ENCODE measurements at regions of chr6 and their contacts with region 1.

Region 1: GRCh38 chr6:89829591-89830385 is at the start of gene CASP8AP2:
- DNase-seq: peak; percentile 97
- H3K4me3 Mint-ChIP-seq: peak within 1 kb of the TSS; percentile 100
- H3K27ac Mint-ChIP-seq: peak within 1 kb of the TSS; percentile 97
- H3K4me1 Mint-ChIP-seq: peaks cover 36% of the 10 kb centered on the region
- H3K27me3 Mint-ChIP-seq: no peaks in the 10 kb centered on the region
- total RNA-seq, gene CASP8AP2: 45.1 to 49.6 TPM

Region 2: GRCh38 chr6:89819336-89820130 is 10.3 kb before region 1 on chr6 and contains the start of gene MDN1:
- CTCF ChIA-PET with region 1: interaction called, 11 read pairs
- POLR2A ChIA-PET with region 1: interaction called, 10 read pairs
- DNase-seq: peak; percentile 93
- H3K4me3 Mint-ChIP-seq: peak within 1 kb of the TSS; percentile 82
- H3K27ac Mint-ChIP-seq: peak within 1 kb of the TSS; percentile 93
- H3K4me1 Mint-ChIP-seq: peaks cover 39% of the 10 kb centered on the region
- H3K27me3 Mint-ChIP-seq: no peaks in the 10 kb centered on the region
- total RNA-seq, gene MDN1: 53.8 to 56.8 TPM